Activated CD4-positive, alpha-beta T cell treated with anti-CD3 and anti-CD28 coated beads, Interleukin-2, amount 10 ng/mL, durations not matched to agents 24 days and 14 days (primary cell): ENCODE measurements at regions of chr10 and their contacts with region 1.

Region 1: GRCh38 chr10:80509403-80510161 is 28.1 kb upstream of the SH2D4B start:
- DNase-seq: no peak
- H3K4me3 Mint-ChIP-seq: no peak overlapping the region
- H3K27ac Mint-ChIP-seq: peak overlapping the region; percentile 52
- H3K4me1 Mint-ChIP-seq: peaks cover 43% of the 10 kb centered on the region
- H3K27me3 Mint-ChIP-seq: no peaks in the 10 kb centered on the region

Region 2: GRCh38 chr10:80530251-80530650 is 20.7 kb after region 1 on chr10:
- intact Hi-C with region 1: loop called (anchors 1 kb)
- DNase-seq: peak; percentile 80
- H3K4me3 Mint-ChIP-seq: peak overlapping the region; percentile 34
- H3K27ac Mint-ChIP-seq: peak overlapping the region; percentile 81
- H3K4me1 Mint-ChIP-seq: peaks cover 65% of the 10 kb centered on the region
- H3K27me3 Mint-ChIP-seq: no peaks in the 10 kb centered on the region

Region 3: DNA sequence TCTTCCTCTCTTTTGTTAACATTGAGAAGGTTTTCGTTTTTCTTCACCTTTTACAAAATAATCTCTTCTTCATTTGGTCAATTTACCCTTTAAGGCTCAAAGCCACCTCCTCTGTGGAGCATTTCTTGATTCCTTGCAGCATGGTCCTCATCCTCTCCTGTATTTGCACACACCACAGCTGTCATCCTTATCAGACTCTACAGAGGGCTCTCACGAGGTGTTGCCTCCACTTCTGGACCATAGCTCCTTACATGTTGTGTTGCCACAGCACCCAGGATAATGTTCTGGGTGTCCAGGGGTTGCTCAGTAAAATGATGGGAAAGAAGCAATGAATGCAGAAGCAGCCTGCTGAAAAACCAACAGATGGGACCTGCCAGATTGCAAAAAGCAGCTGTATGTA is 220.9 kb after region 1 on chr10:
- intact Hi-C with region 1: no loop called
- DNase-seq: peak; percentile 36
- H3K4me3 Mint-ChIP-seq: no peak overlapping the region
- H3K27ac Mint-ChIP-seq: no peak overlapping the region
- H3K4me1 Mint-ChIP-seq: no peaks in the 10 kb centered on the region
- H3K27me3 Mint-ChIP-seq: no peaks in the 10 kb centered on the region